HCT116 (cell line): ENCODE measurements at regions of chr10 and their contacts with region 1.

Region 1: DNA sequence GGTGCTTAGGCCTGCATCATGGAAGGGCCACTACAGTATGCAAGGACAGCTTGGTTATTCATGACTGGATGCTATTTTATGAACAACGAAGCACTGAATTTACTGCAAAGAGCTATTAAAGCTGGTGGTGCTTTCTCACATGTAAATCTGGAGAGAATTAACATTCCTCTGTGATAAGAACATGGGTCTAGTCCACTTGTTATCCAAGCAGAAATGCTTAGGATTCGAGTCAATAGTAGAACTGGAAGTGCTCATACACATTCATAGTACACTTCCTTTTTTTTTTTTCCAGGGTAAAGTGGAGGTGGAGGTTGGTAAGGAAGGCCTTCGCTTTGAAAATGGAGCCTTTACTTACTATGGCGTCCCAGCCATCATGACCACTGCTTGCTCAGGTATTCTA is 35.0 kb downstream of the CNNM1 start:
- DNase-seq: no peak
- ATAC-seq: no peak
- H3K4me3 ChIP-seq: no peak overlapping the region
- H3K27ac ChIP-seq: no peak overlapping the region
- H3K4me1 ChIP-seq: no peaks in the 10 kb centered on the region
- H3K27me3 ChIP-seq: peaks cover 57% of the 10 kb centered on the region
- CTCF ChIP-seq: no peak
- POLR2A ChIP-seq: no peak
- RAD21 ChIP-seq: no peak

Region 2: GRCh38 chr10:99004738-99005137 is 359.4 kb before region 1 on chr10:
- CTCF ChIA-PET with region 1: no interaction called
- POLR2A ChIA-PET with region 1: no interaction called
- RAD21 ChIA-PET with region 1: no interaction called
- intact Hi-C with region 1: loop called (anchors 5 kb)
- DNase-seq: no peak
- ATAC-seq: no peak
- H3K4me3 ChIP-seq: no peak overlapping the region
- H3K27ac ChIP-seq: no peak overlapping the region
- H3K4me1 ChIP-seq: no peaks in the 10 kb centered on the region
- H3K27me3 ChIP-seq: 0 out of 2 replicates have a peak, but pooled peaks cover 8% of the 10 kb centered on the region
- CTCF ChIP-seq: no peak
- POLR2A ChIP-seq: no peak
- RAD21 ChIP-seq: no peak